ENCODE measurements at regions of chr2 and their contacts with region 1.

Region 1: DNA sequence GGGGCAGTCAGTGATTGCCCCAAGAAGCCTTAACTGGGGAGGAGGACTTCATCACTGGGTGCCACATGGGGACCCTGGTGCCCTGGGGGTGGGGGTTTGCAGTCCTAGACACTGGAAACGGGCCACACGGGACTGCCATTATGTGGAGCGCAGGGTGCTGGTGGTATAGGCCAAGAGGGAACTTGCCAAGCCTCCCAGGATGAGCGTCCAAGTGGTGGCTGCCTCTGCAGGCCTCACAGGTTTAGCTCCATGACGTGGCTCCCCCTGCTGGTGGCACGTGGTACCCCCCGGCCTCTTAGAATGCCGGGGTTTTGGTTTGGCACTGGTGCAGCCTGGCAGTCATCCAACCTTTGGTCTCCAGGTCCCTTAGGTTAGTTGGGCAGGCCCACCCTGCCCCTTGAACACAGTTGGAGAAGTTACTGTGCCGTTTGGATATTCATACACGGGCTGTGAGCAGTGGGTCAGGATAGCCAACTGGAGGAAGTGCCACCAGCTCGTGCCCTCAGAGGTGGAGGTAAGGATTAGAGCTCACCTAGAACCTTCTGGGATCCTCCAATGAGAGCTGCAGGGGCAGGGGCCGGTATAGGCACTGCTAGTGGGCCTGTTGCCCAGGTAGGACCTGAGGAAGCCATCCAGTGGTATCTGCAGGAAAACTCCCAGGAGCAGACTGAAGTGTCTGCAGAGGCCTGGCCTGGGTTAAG is 5.6 kb downstream of the PTMA start:
- DNase-seq: peak; percentile 95
- H3K4me3 Mint-ChIP-seq: peak overlapping the region; percentile 46
- H3K27ac Mint-ChIP-seq: peak overlapping the region; percentile 94
- H3K4me1 Mint-ChIP-seq: peaks cover 27% of the 10 kb centered on the region
- H3K27me3 Mint-ChIP-seq: no peaks in the 10 kb centered on the region

Region 2: DNA sequence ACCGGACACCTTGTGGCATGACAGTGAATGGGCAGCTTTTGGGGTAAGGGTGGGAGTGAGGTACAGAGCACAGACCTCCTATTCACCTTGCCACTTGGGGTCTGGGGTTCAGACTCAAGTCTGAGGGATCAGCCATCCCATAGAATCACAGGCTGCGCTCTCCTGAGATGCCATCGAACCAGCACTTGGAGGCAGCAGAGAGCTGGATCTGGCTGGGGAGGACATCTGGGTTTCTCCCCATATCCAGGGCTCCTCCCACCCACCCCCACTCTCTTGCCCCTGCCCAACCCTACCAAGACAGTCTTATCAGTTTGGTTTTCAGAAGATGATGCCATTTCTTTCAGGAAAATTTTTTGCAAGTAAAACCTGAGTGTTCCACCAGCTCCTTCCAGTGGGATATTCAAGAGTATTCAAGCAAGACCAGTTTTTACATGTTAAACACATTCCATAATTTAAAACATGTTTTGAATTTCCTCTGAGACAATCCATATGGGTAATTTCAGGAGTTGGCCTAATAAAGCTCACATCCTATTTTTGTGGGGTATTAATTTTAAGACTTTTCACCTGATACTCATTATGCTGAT is 150.4 kb before region 1 on chr2:
- CTCF ChIA-PET with region 1: interaction called, 5 read pairs
- intact Hi-C with region 1: loop called (anchors 1 kb)
- DNase-seq: peak; percentile 74
- H3K4me3 Mint-ChIP-seq: no peak overlapping the region
- H3K27ac Mint-ChIP-seq: no peak overlapping the region
- H3K4me1 Mint-ChIP-seq: peaks cover 2% of the 10 kb centered on the region
- H3K27me3 Mint-ChIP-seq: no peaks in the 10 kb centered on the region

Region 3: DNA sequence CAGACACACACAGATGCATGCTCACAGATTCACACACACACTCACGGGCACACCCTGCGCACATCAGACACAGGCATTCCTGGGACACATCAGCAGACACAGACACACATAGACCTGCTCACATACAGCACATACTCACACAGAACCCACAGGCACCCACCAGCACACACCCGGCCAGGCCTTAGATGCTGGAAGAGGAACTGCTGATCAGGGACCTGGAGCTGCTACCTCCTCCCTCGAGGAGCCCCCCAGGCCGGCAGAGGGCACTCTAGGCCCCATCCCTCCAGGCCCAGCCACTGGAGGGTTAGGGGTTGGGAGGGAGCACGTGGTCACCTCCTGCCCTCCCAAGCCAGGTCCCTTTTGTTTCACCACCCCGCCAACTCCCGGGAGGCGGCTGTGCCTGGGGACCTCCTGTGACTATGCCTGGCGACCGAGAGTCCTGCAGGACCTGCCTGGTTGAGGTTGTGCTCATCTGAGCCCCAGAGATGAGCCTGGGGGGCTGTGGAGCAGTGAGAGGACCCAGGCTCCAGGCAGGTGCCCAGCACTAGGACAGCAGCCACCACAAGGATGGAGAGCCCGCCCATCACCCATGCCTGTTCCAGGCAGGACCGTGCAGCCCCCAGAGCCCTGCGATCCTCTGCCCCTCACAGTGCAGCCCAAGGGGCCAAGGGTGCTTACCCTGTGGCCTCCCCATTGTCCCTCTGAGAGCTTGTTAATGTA is 26.6 kb before region 1 on chr2:
- CTCF ChIA-PET with region 1: interaction called, 408 read pairs
- intact Hi-C with region 1: loop called (anchors 1 kb)
- DNase-seq: peak; percentile 72
- H3K4me3 Mint-ChIP-seq: no peak overlapping the region
- H3K27ac Mint-ChIP-seq: no peak overlapping the region
- H3K4me1 Mint-ChIP-seq: peaks cover 6% of the 10 kb centered on the region
- H3K27me3 Mint-ChIP-seq: peaks cover 6% of the 10 kb centered on the region

Region 4: DNA sequence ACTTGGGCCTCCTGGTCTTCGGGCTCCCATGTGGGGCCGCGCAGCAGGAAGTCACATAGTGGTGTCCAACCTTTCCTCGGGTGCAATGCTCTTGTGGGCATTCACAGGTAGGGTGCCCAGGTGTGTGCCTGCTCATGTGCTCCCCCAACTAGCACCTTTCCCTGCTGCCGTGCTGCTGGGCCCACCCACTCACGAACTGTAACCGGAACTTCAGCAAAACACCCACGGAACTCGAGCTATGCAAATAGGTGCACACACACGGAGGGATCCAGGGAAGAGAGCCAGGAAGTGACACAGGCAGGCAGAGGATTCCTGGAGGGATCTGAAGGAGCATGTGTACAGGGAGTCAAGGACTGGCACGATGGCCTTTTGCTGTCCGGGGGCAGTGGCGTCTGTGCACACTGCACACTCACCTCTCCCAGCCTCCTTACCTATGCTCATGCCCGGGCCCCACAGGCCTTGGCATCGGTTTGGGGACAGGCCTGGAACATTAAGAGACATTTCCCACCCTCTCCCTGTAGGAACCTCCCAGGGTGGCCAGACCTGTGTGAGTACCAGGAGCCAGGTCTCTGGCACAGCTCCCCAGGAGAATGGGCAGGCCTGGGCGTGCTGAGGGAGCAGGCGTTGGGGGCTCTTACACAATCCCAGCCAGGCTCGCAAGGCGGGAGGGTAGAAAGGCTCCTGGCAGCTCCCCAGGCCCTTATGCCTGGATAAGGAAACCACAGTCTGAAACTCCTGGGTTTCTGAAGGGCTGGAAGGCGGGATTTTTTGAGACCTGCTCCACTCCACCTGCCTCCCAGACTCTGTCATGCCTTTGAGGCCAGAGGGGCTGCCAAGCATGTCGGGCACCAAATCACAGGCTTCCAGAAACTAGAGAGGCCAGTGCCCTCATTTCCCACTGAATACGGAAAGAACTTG is 12.2 kb before region 1 on chr2:
- CTCF ChIA-PET with region 1: interaction called, 44 read pairs
- intact Hi-C with region 1: loop called (anchors 1 kb)
- DNase-seq: no peak
- H3K4me3 Mint-ChIP-seq: no peak overlapping the region
- H3K27ac Mint-ChIP-seq: no peak overlapping the region
- H3K4me1 Mint-ChIP-seq: peaks cover 12% of the 10 kb centered on the region
- H3K27me3 Mint-ChIP-seq: no peaks in the 10 kb centered on the region

Measured in activated naive CD4-positive, alpha-beta T cell treated with anti-CD3 and anti-CD28 coated beads for 36 hours (primary cell).